ENCODE measurements at regions of chr19 and their contacts with region 1.

Region 1: DNA sequence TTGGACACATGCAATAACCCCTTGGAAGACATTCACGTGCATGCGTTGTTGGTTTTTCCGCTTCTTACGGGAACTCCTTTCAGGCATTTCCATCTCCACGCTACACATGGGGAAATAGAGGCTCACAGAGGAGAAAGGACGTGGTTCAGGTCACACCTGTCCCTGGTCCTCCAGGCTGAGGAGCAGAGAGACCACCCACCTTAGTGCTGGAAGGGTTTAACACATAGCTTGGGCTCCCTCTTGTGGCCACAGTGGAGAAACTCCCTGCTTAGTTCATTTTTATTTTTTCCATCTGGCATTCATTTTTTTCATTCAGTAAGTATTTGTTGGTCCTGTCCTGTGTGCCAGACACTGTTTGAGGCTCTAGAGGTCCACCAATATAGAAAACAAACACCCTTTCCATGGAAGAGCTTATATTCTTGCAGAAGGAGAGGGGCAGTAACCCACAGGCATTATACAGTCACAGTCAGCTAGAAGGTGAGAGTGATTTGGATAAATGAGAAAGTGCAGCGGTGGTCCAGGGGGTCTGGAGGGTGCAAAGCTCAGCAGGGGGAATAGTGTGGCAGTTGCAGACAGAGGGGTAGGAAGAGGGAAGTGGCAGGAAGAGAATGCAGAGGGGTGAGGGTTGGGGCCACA is 24.2 kb upstream of the TTYH1 start:
- DNase-seq: peak; percentile 2
- H3K4me3 ChIP-seq: no peak overlapping the region
- H3K27me3 ChIP-seq: no peaks in the 10 kb centered on the region
- CTCF ChIP-seq: peak; percentile 72

Region 2: GRCh38 chr19:54168174-54168917 is 222.7 kb before region 1 on chr19:
- CTCF ChIA-PET with region 1: interaction called, 11 read pairs
- POLR2A ChIA-PET with region 1: no interaction called
- DNase-seq: no peak
- H3K4me3 ChIP-seq: no peak overlapping the region
- H3K27me3 ChIP-seq: no peaks in the 10 kb centered on the region
- CTCF ChIP-seq: peak; percentile 91

Region 3: DNA sequence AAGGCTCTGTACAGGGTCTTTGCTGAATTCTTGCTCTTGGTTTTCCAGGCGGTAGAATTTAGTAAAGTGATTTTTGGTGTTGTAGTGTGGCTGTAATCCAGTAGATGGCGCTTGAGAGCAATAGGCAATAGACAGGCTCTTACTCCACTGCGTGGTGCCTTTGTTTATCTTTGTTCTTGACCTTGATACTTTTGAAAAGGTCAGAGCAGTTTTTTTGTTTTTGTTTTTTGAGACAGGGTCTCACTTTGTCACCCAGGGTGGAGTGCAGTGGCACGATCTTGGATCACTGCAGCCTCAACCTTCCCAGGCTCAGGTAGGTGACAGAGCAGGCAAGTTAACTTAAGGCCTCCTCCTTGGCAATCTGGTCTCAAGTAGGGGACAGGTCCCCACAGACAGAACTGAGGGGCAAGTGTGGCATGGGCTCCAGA is 65.9 kb before region 1 on chr19:
- CTCF ChIA-PET with region 1: interaction called, 10 read pairs
- POLR2A ChIA-PET with region 1: no interaction called
- DNase-seq: no peak
- H3K4me3 ChIP-seq: no peak overlapping the region
- H3K27me3 ChIP-seq: peaks cover under 1% of the 10 kb centered on the region; the same call in 1 of the 2 replicates
- CTCF ChIP-seq: peak; percentile 77

Region 4: DNA sequence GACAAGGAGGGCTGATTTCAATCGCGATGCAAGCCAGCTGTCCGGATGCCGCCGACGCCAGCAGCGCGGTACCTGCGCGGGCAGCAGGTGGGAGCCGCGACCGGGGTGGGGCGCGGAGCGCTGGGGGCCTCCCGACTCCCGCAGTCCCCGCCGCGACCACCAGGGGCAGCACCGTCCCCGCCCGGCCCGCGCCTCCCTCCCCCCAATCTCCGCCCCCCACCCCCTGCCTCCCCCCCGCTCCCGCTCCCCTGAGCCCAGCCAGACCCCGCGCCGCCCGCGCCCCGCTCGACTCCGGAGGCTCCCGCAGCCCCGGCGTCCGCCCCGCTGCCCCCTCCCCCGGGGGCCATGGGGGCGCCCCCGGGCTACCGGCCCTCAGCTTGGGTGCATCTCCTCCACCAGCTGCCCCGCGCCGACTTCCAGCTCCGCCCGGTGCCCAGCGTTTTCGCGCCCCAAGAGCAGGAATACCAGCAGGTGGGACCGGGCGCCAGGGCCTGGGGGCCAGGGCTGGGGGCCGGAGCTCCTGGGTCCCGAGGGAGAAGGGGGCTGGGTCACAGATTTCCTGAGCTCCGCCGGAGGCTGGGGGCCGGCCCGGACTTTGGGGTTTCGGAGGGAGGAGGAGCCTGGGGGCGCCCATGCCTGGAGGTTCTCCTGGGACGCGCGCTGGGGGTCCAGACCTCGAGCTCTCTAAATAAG is 24.3 kb after region 1 on chr19 and contains the start of gene TTYH1:
- CTCF ChIA-PET with region 1: interaction called, 11 read pairs
- POLR2A ChIA-PET with region 1: no interaction called
- DNase-seq: no peak
- H3K4me3 ChIP-seq: no peak within 1 kb of the TSS
- H3K27me3 ChIP-seq: peaks cover 11% of the 10 kb centered on the region
- CTCF ChIP-seq: no peak
- polyA plus RNA-seq, gene TTYH1: not detected in 2 replicates

Region 5: DNA sequence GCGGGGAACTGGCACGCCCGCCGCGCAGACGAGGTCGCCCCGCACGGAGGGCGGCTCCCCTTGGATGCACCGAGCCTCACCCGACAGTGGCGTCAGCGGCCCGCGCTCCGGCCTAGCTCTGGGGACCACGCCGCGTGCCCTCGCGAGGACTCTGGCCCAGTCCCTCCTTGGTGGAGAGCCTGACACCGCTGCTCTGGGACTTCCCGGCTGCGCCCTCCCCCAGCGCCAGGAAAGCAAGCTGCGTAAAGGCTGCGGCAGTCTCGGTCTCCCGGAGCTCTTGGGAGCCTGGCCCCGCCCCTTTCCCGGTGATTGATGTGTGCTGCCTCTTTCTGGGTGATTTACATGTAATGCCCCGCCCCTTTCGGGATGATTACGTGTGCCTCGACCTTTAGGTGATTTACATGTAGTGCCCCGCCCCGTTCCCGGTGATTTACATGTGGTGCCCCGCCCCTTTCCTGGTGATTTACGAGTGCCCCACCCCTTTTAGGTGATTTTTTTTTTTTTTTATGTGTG is 72.5 kb after region 1 on chr19 and contains the start of gene LENG9:
- CTCF ChIA-PET with region 1: no interaction called
- POLR2A ChIA-PET with region 1: no interaction called
- DNase-seq: peak; percentile 92
- H3K4me3 ChIP-seq: peak within 1 kb of the TSS; percentile 63
- H3K27me3 ChIP-seq: no peaks in the 10 kb centered on the region
- CTCF ChIP-seq: no peak
- polyA plus RNA-seq, gene LENG9: 1.4 and 2.0 TPM in 2 replicates

Measured in BJ (cell line).